ENCODE measurements at regions of chr10 and their contacts with region 1.

Region 1: GRCh38 chr10:97388152-97388551 is 13.0 kb downstream of the RRP12 start:
- DNase-seq: peak in 2 of 3 donors; percentile 16 to 65
- H3K4me3 ChIP-seq: no peak overlapping the region
- H3K4me3 Mint-ChIP-seq: no peak overlapping the region
- H3K27ac ChIP-seq: peak overlapping the region in 1 of 2 donors; percentile 40
- H3K27ac Mint-ChIP-seq: peak overlapping the region in 5 of 7 donors; percentile 28 to 75 (median 61)
- H3K4me1 ChIP-seq: peaks cover 19 to 27% of the 10 kb centered on the region in 2 donors
- H3K4me1 Mint-ChIP-seq: peaks cover 21% of the 10 kb centered on the region
- H3K27me3 ChIP-seq: no peaks in the 10 kb centered on the region
- H3K27me3 Mint-ChIP-seq: peaks cover 0 to 2% (median 0%) of the 10 kb centered on the region in 3 donors
- CTCF ChIP-seq: no peak

Region 2: GRCh38 chr10:97341416-97341815 is 46.7 kb before region 1 on chr10:
- intact Hi-C with region 1: loop called in 1 of 2 experiments (anchors 5 kb)
- DNase-seq: no peak
- H3K4me3 ChIP-seq: no peak overlapping the region
- H3K4me3 Mint-ChIP-seq: no peak overlapping the region
- H3K27ac ChIP-seq: no peak overlapping the region
- H3K27ac Mint-ChIP-seq: peak overlapping the region in 1 of 7 donors; percentile 32
- H3K4me1 ChIP-seq: peaks cover 8 to 27% of the 10 kb centered on the region in 2 donors
- H3K4me1 Mint-ChIP-seq: peaks cover 39% of the 10 kb centered on the region
- H3K27me3 ChIP-seq: no peaks in the 10 kb centered on the region
- H3K27me3 Mint-ChIP-seq: peaks cover 0 to 6% (median 2%) of the 10 kb centered on the region in 3 donors
- CTCF ChIP-seq: no peak